ENCODE measurements at regions of chr14 and their contacts with region 1.

Region 1: GRCh38 chr14:54338696-54339317 is 58.0 kb upstream of the CDKN3 start:
- DNase-seq: peak; percentile 37
- H3K4me3 ChIP-seq: no peak overlapping the region
- H3K27ac ChIP-seq: no peak overlapping the region
- H3K4me1 ChIP-seq: no peaks in the 10 kb centered on the region
- H3K27me3 ChIP-seq: no peaks in the 10 kb centered on the region
- CTCF ChIP-seq: peak; percentile 77 to 78

Region 2: DNA sequence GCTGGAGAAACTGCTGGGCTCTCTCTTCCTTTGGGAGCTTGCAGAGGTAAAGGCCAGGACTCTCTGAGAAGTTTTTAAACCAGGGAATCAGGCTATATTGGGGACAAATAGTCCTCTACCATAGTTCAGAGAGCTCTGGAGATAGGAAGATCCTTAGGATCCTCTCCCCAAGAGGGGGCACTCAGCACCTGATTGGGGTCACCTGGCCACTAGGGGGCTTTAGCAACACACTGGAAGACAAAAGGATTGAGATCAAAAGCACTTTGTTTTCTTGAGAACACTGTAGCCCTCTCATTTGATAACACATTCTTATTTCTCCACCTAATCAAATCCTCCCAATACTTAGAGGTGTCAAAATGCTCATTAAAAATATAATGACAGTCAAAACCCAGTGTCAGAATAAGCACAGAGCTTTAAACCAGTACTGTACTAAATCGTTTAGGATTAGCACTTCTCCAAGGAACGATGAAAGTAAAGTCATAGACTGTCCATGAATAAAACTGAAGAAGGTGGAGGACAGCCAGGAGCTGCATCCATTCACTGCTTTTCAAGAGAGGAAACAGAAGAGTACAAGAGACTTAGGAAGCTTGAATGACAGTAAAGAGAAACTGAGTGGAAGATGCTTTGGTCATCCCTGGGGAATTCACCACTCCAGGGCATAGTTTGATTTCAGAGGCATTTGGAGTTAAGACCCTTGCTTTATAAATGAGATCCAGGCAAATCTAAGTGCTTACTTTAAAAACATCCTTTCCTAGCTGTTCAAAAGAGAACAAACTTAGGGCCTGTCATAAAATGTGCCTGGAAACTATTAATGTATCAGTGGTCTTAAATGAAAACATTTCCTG is 408.7 kb before region 1 on chr14:
- CTCF ChIA-PET with region 1: no interaction called
- dilution Hi-C with region 1: no loop called
- in situ Hi-C with region 1: loop called (anchors 25 kb)
- intact Hi-C with region 1: loop called (anchors 1 kb)
- DNase-seq: peak; percentile 27
- H3K4me3 ChIP-seq: no peak overlapping the region
- H3K27ac ChIP-seq: no peak overlapping the region
- H3K4me1 ChIP-seq: peaks cover 11% of the 10 kb centered on the region
- H3K27me3 ChIP-seq: no peaks in the 10 kb centered on the region
- CTCF ChIP-seq: peak; percentile 63 to 68

Region 3: GRCh38 chr14:53953002-53953827 is 385.6 kb before region 1 on chr14:
- CTCF ChIA-PET with region 1: no interaction called
- dilution Hi-C with region 1: no loop called
- in situ Hi-C with region 1: loop called (anchors 25 kb)
- intact Hi-C with region 1: loop called (anchors 5 kb)
- DNase-seq: peak; percentile 59
- H3K4me3 ChIP-seq: peak overlapping the region; percentile 48 to 67 (median 59)
- H3K27ac ChIP-seq: peak overlapping the region; percentile 56
- H3K4me1 ChIP-seq: peaks cover 17% of the 10 kb centered on the region
- H3K27me3 ChIP-seq: no peaks in the 10 kb centered on the region
- CTCF ChIP-seq: no peak

Region 4: GRCh38 chr14:54374117-54374884 is 35.5 kb after region 1 on chr14:
- CTCF ChIA-PET with region 1: no interaction called
- dilution Hi-C with region 1: no loop called
- in situ Hi-C with region 1: no loop called
- intact Hi-C with region 1: no loop called
- DNase-seq: no peak
- H3K4me3 ChIP-seq: no peak overlapping the region
- H3K27ac ChIP-seq: no peak overlapping the region
- H3K4me1 ChIP-seq: no peaks in the 10 kb centered on the region
- H3K27me3 ChIP-seq: no peaks in the 10 kb centered on the region
- CTCF ChIP-seq: no peak

Measured in mammary epithelial cell (primary cell).